ENCODE measurements at regions of chr4 and their contacts with region 1.

Region 1: GRCh38 chr4:168514249-168514852 is 17.5 kb downstream of the PALLD start:
- DNase-seq: no peak
- H3K4me3 ChIP-seq: no peak overlapping the region
- H3K27ac ChIP-seq: no peak overlapping the region
- H3K4me1 ChIP-seq: no peaks in the 10 kb centered on the region
- H3K27me3 ChIP-seq: no peaks in the 10 kb centered on the region
- CTCF ChIP-seq: peak; percentile 26 to 42

Region 2: GRCh38 chr4:168153596-168154440 is 360.5 kb before region 1 on chr4:
- intact Hi-C with region 1: no loop called
- DNase-seq: peak; percentile 73 to 88
- H3K4me3 ChIP-seq: peak overlapping the region in 1 of 2 donors; percentile 27
- H3K27ac ChIP-seq: no peak overlapping the region
- H3K4me1 ChIP-seq: no peaks in the 10 kb centered on the region
- H3K27me3 ChIP-seq: no peaks in the 10 kb centered on the region
- CTCF ChIP-seq: peak; percentile 23 to 51

Region 3: DNA sequence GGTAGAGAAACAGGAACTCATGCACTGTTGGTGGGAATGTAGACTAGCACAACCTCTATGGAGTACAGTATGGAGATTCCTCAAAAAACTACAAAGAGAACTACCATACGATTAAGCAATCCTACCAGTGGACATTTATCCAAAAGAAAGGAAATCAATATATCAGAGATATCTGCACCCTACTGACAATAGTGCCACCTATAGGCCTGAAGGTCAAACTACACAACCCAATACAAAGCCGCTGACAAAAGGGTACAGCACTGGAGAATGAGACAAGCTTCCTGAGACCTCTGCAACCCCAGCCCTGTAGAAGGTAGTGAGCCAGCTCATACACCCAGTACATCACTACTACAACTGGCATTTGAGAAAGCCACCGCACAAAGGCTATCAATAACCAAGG is 428.6 kb after region 1 on chr4:
- intact Hi-C with region 1: loop called (anchors 10 kb)
- DNase-seq: no peak
- H3K4me3 ChIP-seq: no peak overlapping the region
- H3K27ac ChIP-seq: no peak overlapping the region
- H3K4me1 ChIP-seq: no peaks in the 10 kb centered on the region
- H3K27me3 ChIP-seq: no peaks in the 10 kb centered on the region
- CTCF ChIP-seq: peak; percentile 19 to 30